ENCODE measurements at regions of chr3 and their contacts with region 1.

Region 1: GRCh38 chr3:108124337-108125152 is 33.7 kb upstream of the CD47 start:
- DNase-seq: peak; percentile 15 to 91 (median 57)
- ATAC-seq: peak; percentile 59
- H3K4me3 ChIP-seq: peak overlapping the region; percentile 41 to 55
- H3K4me3 Mint-ChIP-seq: peak overlapping the region; percentile 84
- H3K27ac ChIP-seq: peak overlapping the region; percentile 78 to 85
- H3K27ac Mint-ChIP-seq: peak overlapping the region; percentile 99
- H3K4me1 ChIP-seq: peaks cover 64% of the 10 kb centered on the region
- H3K4me1 Mint-ChIP-seq: peaks cover 65% of the 10 kb centered on the region
- H3K27me3 ChIP-seq: no peaks in the 10 kb centered on the region
- H3K27me3 Mint-ChIP-seq: no peaks in the 10 kb centered on the region
- CTCF ChIP-seq: no peak

Region 2: GRCh38 chr3:108073764-108074431 is 50.6 kb before region 1 on chr3:
- CTCF ChIA-PET with region 1: no interaction called
- POLR2A ChIA-PET with region 1: interaction called, 3 read pairs
- intact Hi-C with region 1: loop called in 1 of 2 experiments (anchors 10 kb)
- DNase-seq: no peak
- ATAC-seq: no peak
- H3K4me3 ChIP-seq: no peak overlapping the region
- H3K4me3 Mint-ChIP-seq: no peak overlapping the region
- H3K27ac ChIP-seq: no peak overlapping the region
- H3K27ac Mint-ChIP-seq: peak overlapping the region; percentile 42
- H3K4me1 ChIP-seq: peaks cover 58% of the 10 kb centered on the region
- H3K4me1 Mint-ChIP-seq: peaks cover 74% of the 10 kb centered on the region
- H3K27me3 ChIP-seq: no peaks in the 10 kb centered on the region
- H3K27me3 Mint-ChIP-seq: no peaks in the 10 kb centered on the region
- CTCF ChIP-seq: no peak

Region 3: GRCh38 chr3:108136561-108137459 is 12.3 kb after region 1 on chr3:
- CTCF ChIA-PET with region 1: no interaction called
- POLR2A ChIA-PET with region 1: no interaction called
- intact Hi-C with region 1: loop called in 1 of 2 experiments (anchors 2 kb)
- DNase-seq: no peak
- ATAC-seq: no peak
- H3K4me3 ChIP-seq: no peak overlapping the region
- H3K4me3 Mint-ChIP-seq: no peak overlapping the region
- H3K27ac ChIP-seq: no peak overlapping the region
- H3K27ac Mint-ChIP-seq: no peak overlapping the region
- H3K4me1 ChIP-seq: peaks cover 26% of the 10 kb centered on the region
- H3K4me1 Mint-ChIP-seq: peaks cover 54% of the 10 kb centered on the region
- H3K27me3 ChIP-seq: no peaks in the 10 kb centered on the region
- H3K27me3 Mint-ChIP-seq: no peaks in the 10 kb centered on the region
- CTCF ChIP-seq: no peak

Region 4: DNA sequence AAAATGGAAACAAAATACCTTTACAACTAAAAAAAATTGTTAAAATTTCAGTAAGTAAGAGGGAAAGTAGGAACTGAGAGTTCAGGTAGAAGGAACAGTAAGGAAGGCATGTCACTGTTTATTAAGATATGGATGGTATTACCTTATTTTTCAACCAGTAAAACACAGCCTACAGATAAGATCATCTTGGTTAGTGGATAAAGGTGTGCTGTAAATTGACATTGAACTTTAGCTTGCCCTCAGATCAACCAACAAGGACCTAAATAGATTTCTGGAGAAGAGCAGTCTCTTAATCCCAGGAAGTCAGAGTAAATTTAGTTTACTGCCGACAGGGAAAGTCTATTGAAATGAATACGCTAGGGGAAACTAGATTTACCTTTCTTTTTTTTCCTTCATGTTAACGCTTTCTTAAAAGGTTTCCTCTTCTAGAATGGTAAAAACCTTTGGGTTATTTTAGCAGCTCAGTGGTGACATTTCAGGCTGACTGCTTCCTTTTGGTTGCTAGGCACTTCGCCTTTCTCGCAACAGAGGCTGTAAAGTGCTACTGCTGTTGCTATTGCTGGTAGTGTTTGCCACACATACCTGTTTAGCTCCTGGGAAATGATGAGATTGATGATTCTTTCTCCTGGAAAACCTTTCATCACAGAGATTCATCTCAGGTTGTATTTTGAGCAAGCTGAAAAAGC is 477.8 kb after region 1 on chr3:
- CTCF ChIA-PET with region 1: no interaction called
- POLR2A ChIA-PET with region 1: no interaction called
- intact Hi-C with region 1: loop called in 1 of 2 experiments (anchors 5 kb)
- DNase-seq: peak in 8 of 9 experiments; percentile 20 to 79 (median 46)
- ATAC-seq: peak; percentile 87
- H3K4me3 ChIP-seq: peak overlapping the region; percentile 11 to 31
- H3K4me3 Mint-ChIP-seq: peak overlapping the region; percentile 80
- H3K27ac ChIP-seq: peak overlapping the region; percentile 32 to 75
- H3K27ac Mint-ChIP-seq: peak overlapping the region; percentile 94
- H3K4me1 ChIP-seq: peaks cover 45% of the 10 kb centered on the region
- H3K4me1 Mint-ChIP-seq: peaks cover 67% of the 10 kb centered on the region
- H3K27me3 ChIP-seq: no peaks in the 10 kb centered on the region
- H3K27me3 Mint-ChIP-seq: no peaks in the 10 kb centered on the region
- CTCF ChIP-seq: no peak

Measured in CD8-positive, alpha-beta T cell (primary cell).